Naive thymus-derived CD4-positive, alpha-beta T cell (primary cell): ENCODE measurements at regions of chr4 and their contacts with region 1.

Region 1: DNA sequence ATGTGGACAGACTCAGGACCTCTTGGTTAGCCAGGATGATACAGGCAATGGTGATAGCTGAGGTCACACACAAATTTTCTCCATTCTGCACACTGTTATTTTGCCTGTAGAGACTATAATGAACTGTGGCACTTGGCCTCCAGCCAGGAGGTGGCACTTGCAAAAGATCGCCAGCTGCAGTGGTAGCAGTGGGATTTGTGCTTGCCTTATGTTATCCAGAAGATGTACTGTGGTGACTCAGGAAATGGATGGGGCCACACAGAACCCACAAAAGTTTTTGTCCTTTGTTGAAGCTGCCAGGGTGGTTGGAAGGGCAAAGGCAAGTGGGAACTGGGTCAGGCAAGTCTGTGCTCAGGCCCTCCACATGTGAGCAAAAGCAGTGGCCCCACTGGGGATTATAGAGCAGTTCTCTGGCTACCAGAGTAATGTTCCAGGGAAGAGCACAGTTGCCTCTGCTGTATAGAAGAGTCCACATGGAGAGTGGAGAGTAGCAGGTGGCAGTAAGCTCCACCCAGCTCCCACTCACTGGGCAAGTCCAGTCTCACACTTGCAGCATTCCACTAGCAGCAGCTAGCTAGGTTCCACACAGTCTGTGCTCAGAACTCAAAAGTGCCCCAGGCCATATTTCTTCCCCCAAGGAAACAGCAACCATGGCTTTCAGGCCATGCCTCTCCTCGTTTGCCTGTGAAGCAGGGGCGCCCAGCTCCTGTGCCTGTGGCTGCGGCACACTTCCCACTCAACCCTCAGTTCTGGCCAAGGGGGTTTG is 5.8 kb upstream of the C4orf17 start:
- DNase-seq: no peak
- ATAC-seq: no peak
- H3K4me3 ChIP-seq: no peak overlapping the region
- H3K4me3 Mint-ChIP-seq: peak overlapping the region in 3 of 10 donors; percentile 14 to 76 (median 56)
- H3K27ac ChIP-seq: no peak overlapping the region
- H3K27ac Mint-ChIP-seq: peak overlapping the region in 8 of 9 donors; percentile 14 to 91 (median 40)
- H3K4me1 ChIP-seq: peaks cover 8 to 33% of the 10 kb centered on the region in 2 donors
- H3K4me1 Mint-ChIP-seq: peaks cover 31 to 63% (median 57%) of the 10 kb centered on the region in 7 donors
- H3K27me3 ChIP-seq: no peaks in the 10 kb centered on the region
- H3K27me3 Mint-ChIP-seq: peaks cover 0 to 2% (median 0%) of the 10 kb centered on the region in 5 donors

Region 2: GRCh38 chr4:98506462-98507132 is 998.4 kb before region 1 on chr4:
- CTCF ChIA-PET with region 1: no interaction called
- POLR2A ChIA-PET with region 1: no interaction called
- intact Hi-C with region 1: no loop called
- DNase-seq: no peak
- ATAC-seq: no peak
- H3K4me3 ChIP-seq: no peak overlapping the region
- H3K4me3 Mint-ChIP-seq: no peak overlapping the region
- H3K27ac ChIP-seq: no peak overlapping the region
- H3K27ac Mint-ChIP-seq: no peak overlapping the region
- H3K4me1 ChIP-seq: peaks cover 0 to 5% of the 10 kb centered on the region in 2 donors
- H3K4me1 Mint-ChIP-seq: peaks cover 5 to 48% (median 14%) of the 10 kb centered on the region in 7 donors
- H3K27me3 ChIP-seq: no peaks in the 10 kb centered on the region
- H3K27me3 Mint-ChIP-seq: no peaks in the 10 kb centered on the region

Region 3: GRCh38 chr4:99088481-99089365 is 416.3 kb before region 1 on chr4 and contains the start of gene ADH5:
- CTCF ChIA-PET with region 1: no interaction called
- POLR2A ChIA-PET with region 1: interaction called, 4 read pairs
- intact Hi-C with region 1: loop called (anchors 1 to 5 kb)
- DNase-seq: peak; percentile 75 to 90 (median 85)
- ATAC-seq: peak; percentile 98
- H3K4me3 ChIP-seq: peak within 1 kb of the TSS; percentile 98
- H3K4me3 Mint-ChIP-seq: peak within 1 kb of the TSS; percentile 93 to 99 (median 98)
- H3K27ac ChIP-seq: peak within 1 kb of the TSS; percentile 85
- H3K27ac Mint-ChIP-seq: peak within 1 kb of the TSS; percentile 94 to 99 (median 98)
- H3K4me1 ChIP-seq: peaks cover 8 to 9% of the 10 kb centered on the region in 2 donors
- H3K4me1 Mint-ChIP-seq: peaks cover 28 to 67% (median 57%) of the 10 kb centered on the region in 7 donors
- H3K27me3 ChIP-seq: no peaks in the 10 kb centered on the region
- H3K27me3 Mint-ChIP-seq: peaks cover 0 to 11% (median 0%) of the 10 kb centered on the region in 5 donors
- total RNA-seq, gene ADH5: 42.7 to 102 (median 74.0) TPM

Region 4: GRCh38 chr4:99457270-99457669 is 47.7 kb before region 1 on chr4:
- CTCF ChIA-PET with region 1: no interaction called
- POLR2A ChIA-PET with region 1: no interaction called
- intact Hi-C with region 1: no loop called
- DNase-seq: no peak
- ATAC-seq: no peak
- H3K4me3 ChIP-seq: no peak overlapping the region
- H3K4me3 Mint-ChIP-seq: no peak overlapping the region
- H3K27ac ChIP-seq: no peak overlapping the region
- H3K27ac Mint-ChIP-seq: no peak overlapping the region
- H3K4me1 ChIP-seq: no peaks in the 10 kb centered on the region
- H3K4me1 Mint-ChIP-seq: no peaks in the 10 kb centered on the region
- H3K27me3 ChIP-seq: no peaks in the 10 kb centered on the region
- H3K27me3 Mint-ChIP-seq: peaks cover 4 to 21% (median 17%) of the 10 kb centered on the region in 5 donors

Region 5: DNA sequence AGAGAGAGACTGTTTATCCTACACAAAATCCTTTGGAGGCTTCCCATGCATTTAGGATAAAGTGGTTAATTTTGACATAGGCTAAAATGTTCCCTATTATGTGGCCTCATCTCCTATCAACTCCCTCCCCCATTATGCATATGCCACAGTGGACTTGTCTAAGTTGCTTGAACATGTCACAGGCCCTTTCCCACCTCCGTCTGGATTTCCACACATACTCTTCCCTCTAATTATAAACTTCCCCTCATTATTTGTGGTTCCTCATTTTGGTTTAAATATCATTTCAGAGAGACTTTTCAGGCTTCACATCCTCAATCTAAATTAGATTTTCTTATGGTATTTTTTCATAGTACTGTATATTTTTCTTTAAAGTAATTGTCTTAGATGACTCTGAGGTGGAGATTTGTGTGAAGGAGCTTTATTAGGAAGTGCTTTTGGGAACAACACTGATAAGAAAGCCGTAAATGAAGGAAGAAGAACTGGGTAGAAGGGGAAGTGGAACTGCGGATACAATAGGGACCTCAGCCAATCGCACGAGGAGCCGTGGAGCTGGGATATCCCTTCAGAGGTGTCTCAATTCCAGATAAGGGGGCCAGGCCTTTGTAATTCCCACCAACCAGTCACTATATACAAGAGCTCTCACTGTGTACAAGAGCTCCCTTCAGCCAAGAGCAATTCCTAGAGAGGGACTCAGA is 13.8 kb after region 1 on chr4:
- CTCF ChIA-PET with region 1: no interaction called
- POLR2A ChIA-PET with region 1: interaction called, 3 read pairs
- intact Hi-C with region 1: loop called in 1 of 2 experiments (anchors 1 kb)
- DNase-seq: no peak
- ATAC-seq: peak; percentile 20
- H3K4me3 ChIP-seq: no peak overlapping the region
- H3K4me3 Mint-ChIP-seq: no peak overlapping the region
- H3K27ac ChIP-seq: no peak overlapping the region
- H3K27ac Mint-ChIP-seq: no peak overlapping the region
- H3K4me1 ChIP-seq: no peaks in the 10 kb centered on the region
- H3K4me1 Mint-ChIP-seq: no peaks in the 10 kb centered on the region
- H3K27me3 ChIP-seq: no peaks in the 10 kb centered on the region
- H3K27me3 Mint-ChIP-seq: peaks cover 0 to 11% (median 0%) of the 10 kb centered on the region in 5 donors

Region 6: DNA sequence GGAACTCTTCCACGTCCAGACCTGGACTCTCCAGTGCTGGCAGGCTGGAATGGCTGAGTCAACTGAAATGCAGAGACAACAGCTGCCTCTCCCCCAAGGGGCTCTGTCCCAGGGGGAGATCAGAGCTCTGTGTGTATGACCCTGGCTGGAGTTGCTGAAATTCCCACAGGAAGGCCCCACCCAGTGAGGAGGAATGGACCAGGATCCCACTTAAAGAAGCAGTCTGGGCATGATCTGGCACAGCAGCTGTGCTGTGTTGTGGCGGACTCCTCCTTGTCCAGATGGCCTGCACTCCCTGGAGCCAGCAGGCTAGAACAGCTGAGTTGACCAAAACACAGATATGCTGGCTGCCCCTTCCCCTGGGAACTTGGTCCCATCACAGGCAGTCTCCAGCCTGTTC is 31.3 kb after region 1 on chr4:
- CTCF ChIA-PET with region 1: no interaction called
- POLR2A ChIA-PET with region 1: interaction called, 5 read pairs
- intact Hi-C with region 1: loop called in 1 of 2 experiments (anchors 2 kb)
- DNase-seq: no peak
- ATAC-seq: no peak
- H3K4me3 ChIP-seq: no peak overlapping the region
- H3K4me3 Mint-ChIP-seq: no peak overlapping the region
- H3K27ac ChIP-seq: no peak overlapping the region
- H3K27ac Mint-ChIP-seq: no peak overlapping the region
- H3K4me1 ChIP-seq: no peaks in the 10 kb centered on the region
- H3K4me1 Mint-ChIP-seq: no peaks in the 10 kb centered on the region
- H3K27me3 ChIP-seq: peaks cover 0 to under 1% of the 10 kb centered on the region in 2 donors
- H3K27me3 Mint-ChIP-seq: peaks cover 0 to 13% (median 3%) of the 10 kb centered on the region in 5 donors

Region 7: GRCh38 chr4:99574530-99575324 is 69.7 kb after region 1 on chr4 and contains the start of gene MTTP:
- CTCF ChIA-PET with region 1: no interaction called
- POLR2A ChIA-PET with region 1: no interaction called
- intact Hi-C with region 1: no loop called
- DNase-seq: no peak
- ATAC-seq: no peak
- H3K4me3 ChIP-seq: no peak within 1 kb of the TSS
- H3K4me3 Mint-ChIP-seq: no peak within 1 kb of the TSS
- H3K27ac ChIP-seq: no peak within 1 kb of the TSS
- H3K27ac Mint-ChIP-seq: no peak within 1 kb of the TSS
- H3K4me1 ChIP-seq: no peaks in the 10 kb centered on the region
- H3K4me1 Mint-ChIP-seq: peaks cover 0 to 3% (median 0%) of the 10 kb centered on the region in 7 donors
- H3K27me3 ChIP-seq: peaks cover 0 to 5% of the 10 kb centered on the region in 2 donors
- H3K27me3 Mint-ChIP-seq: peaks cover 39 to 51% (median 44%) of the 10 kb centered on the region in 5 donors
- total RNA-seq, gene MTTP: 0.51 to 0.76 TPM in 2 of 5 experiments, not detected in the others

Region 8: DNA sequence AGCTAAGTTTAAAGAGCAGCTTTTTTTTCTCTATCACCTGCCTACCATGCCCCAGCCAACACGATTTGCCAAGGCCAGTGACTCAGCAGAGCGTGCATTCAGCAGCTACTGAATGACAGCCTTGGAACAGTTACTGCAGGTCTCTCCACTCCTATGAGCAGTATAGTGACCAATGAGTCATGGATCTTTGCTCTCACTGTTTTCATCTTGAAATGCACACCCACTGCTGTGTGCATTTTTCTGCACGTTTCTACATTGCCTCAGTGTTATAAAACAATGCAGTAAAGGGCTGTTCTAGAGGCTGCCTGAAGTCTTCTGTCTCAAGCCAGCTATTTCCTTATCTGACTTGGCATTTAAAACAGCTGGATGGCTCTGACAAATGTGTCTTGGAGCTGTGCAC is 218.6 kb after region 1 on chr4:
- CTCF ChIA-PET with region 1: no interaction called
- POLR2A ChIA-PET with region 1: no interaction called
- intact Hi-C with region 1: no loop called
- DNase-seq: no peak
- ATAC-seq: no peak
- H3K4me3 ChIP-seq: no peak overlapping the region
- H3K4me3 Mint-ChIP-seq: no peak overlapping the region
- H3K27ac ChIP-seq: no peak overlapping the region
- H3K27ac Mint-ChIP-seq: no peak overlapping the region
- H3K4me1 ChIP-seq: no peaks in the 10 kb centered on the region
- H3K4me1 Mint-ChIP-seq: no peaks in the 10 kb centered on the region
- H3K27me3 ChIP-seq: no peaks in the 10 kb centered on the region
- H3K27me3 Mint-ChIP-seq: peaks cover 0 to 13% (median 9%) of the 10 kb centered on the region in 5 donors

Region 9: GRCh38 chr4:99855678-99856077 is 350.7 kb after region 1 on chr4:
- CTCF ChIA-PET with region 1: no interaction called
- POLR2A ChIA-PET with region 1: no interaction called
- intact Hi-C with region 1: loop called in 1 of 2 experiments (anchors 5 kb)
- DNase-seq: no peak
- ATAC-seq: peak; percentile 78
- H3K4me3 ChIP-seq: no peak overlapping the region
- H3K4me3 Mint-ChIP-seq: peak overlapping the region in 9 of 10 donors; percentile 11 to 66 (median 45)
- H3K27ac ChIP-seq: no peak overlapping the region
- H3K27ac Mint-ChIP-seq: peak overlapping the region in 8 of 9 donors; percentile 5 to 89 (median 46)
- H3K4me1 ChIP-seq: peaks cover 8 to 9% of the 10 kb centered on the region in 2 donors
- H3K4me1 Mint-ChIP-seq: peaks cover 22 to 72% (median 34%) of the 10 kb centered on the region in 7 donors
- H3K27me3 ChIP-seq: no peaks in the 10 kb centered on the region
- H3K27me3 Mint-ChIP-seq: no peaks in the 10 kb centered on the region

Region 10: GRCh38 chr4:99894161-99894997 is 389.4 kb after region 1 on chr4 and contains the start of gene LAMTOR3:
- CTCF ChIA-PET with region 1: no interaction called
- POLR2A ChIA-PET with region 1: no interaction called
- intact Hi-C with region 1: loop called in 1 of 2 experiments (anchors 5 kb)
- DNase-seq: peak; percentile 70 to 92 (median 89)
- ATAC-seq: peak; percentile 98
- H3K4me3 ChIP-seq: peak within 1 kb of the TSS; percentile 92
- H3K4me3 Mint-ChIP-seq: peak within 1 kb of the TSS; percentile 96 to 99 (median 98)
- H3K27ac ChIP-seq: peak within 1 kb of the TSS; percentile 96
- H3K27ac Mint-ChIP-seq: peak within 1 kb of the TSS; percentile 96 to 99 (median 98)
- H3K4me1 ChIP-seq: peaks cover 13 to 25% of the 10 kb centered on the region in 2 donors
- H3K4me1 Mint-ChIP-seq: peaks cover 25 to 55% (median 52%) of the 10 kb centered on the region in 7 donors
- H3K27me3 ChIP-seq: no peaks in the 10 kb centered on the region
- H3K27me3 Mint-ChIP-seq: no peaks in the 10 kb centered on the region
- total RNA-seq, gene LAMTOR3: 20.1 to 32.6 (median 27.4) TPM